A549 (cell line): ENCODE measurements at regions of chr12 and their contacts with region 1.

Region 1: GRCh38 chr12:98424726-98425401 is 90.5 kb upstream of the TMPO start:
- DNase-seq: peak; percentile 74 to 76
- ATAC-seq: peak; percentile 90 to 91
- H3K4me3 ChIP-seq: no peak overlapping the region
- H3K27ac ChIP-seq: peak overlapping the region in 1 of 2 experiments; percentile 50; a peak in 1 of 6 replicates
- H3K4me1 ChIP-seq: peaks cover 12% of the 10 kb centered on the region
- CTCF ChIP-seq: peak; percentile 86
- EP300 ChIP-seq: no peak
- POLR2A ChIP-seq: no peak
- RAD21 ChIP-seq: peak; percentile 72 to 82

Region 2: GRCh38 chr12:98439981-98440581 is 15.2 kb after region 1 on chr12:
- CTCF ChIA-PET with region 1: interaction called, 11 read pairs
- POLR2A ChIA-PET with region 1: interaction called, 4 read pairs
- DNase-seq: peak in 1 of 2 experiments; percentile 64
- ATAC-seq: peak; percentile 79 to 90
- H3K4me3 ChIP-seq: no peak overlapping the region
- H3K27ac ChIP-seq: peak overlapping the region; percentile 56 to 76
- H3K4me1 ChIP-seq: peaks cover 14% of the 10 kb centered on the region
- CTCF ChIP-seq: no peak
- EP300 ChIP-seq: peak in 1 of 2 experiments; percentile 44; a peak in 2 of 5 replicates
- POLR2A ChIP-seq: no peak
- RAD21 ChIP-seq: no peak

Region 3: GRCh38 chr12:98449584-98449983 is 24.7 kb after region 1 on chr12:
- CTCF ChIA-PET with region 1: interaction called, 18 read pairs
- POLR2A ChIA-PET with region 1: no interaction called
- DNase-seq: no peak
- ATAC-seq: no peak
- H3K4me3 ChIP-seq: no peak overlapping the region
- H3K27ac ChIP-seq: no peak overlapping the region
- H3K4me1 ChIP-seq: 0 out of 3 replicates have a peak, but pooled peaks cover 15% of the 10 kb centered on the region
- CTCF ChIP-seq: no peak
- EP300 ChIP-seq: no peak
- POLR2A ChIP-seq: no peak
- RAD21 ChIP-seq: no peak

Region 4: GRCh38 chr12:98532681-98533304 is 107.9 kb after region 1 on chr12:
- CTCF ChIA-PET with region 1: interaction called, 24 read pairs
- POLR2A ChIA-PET with region 1: no interaction called
- DNase-seq: peak; percentile 49 to 79
- ATAC-seq: peak; percentile 91 to 93
- H3K4me3 ChIP-seq: no peak overlapping the region
- H3K27ac ChIP-seq: peak overlapping the region; percentile 1 to 64; a peak in 3 of 6 replicates
- H3K4me1 ChIP-seq: peaks cover 19% of the 10 kb centered on the region; the same call in 2 of the 3 replicates
- CTCF ChIP-seq: peak; percentile 83
- EP300 ChIP-seq: no peak
- POLR2A ChIP-seq: no peak
- RAD21 ChIP-seq: peak; percentile 37 to 45; a peak in 4 of 5 replicates